A673 (cell line): ENCODE measurements at regions of chr7 and their contacts with region 1.

Region 1: DNA sequence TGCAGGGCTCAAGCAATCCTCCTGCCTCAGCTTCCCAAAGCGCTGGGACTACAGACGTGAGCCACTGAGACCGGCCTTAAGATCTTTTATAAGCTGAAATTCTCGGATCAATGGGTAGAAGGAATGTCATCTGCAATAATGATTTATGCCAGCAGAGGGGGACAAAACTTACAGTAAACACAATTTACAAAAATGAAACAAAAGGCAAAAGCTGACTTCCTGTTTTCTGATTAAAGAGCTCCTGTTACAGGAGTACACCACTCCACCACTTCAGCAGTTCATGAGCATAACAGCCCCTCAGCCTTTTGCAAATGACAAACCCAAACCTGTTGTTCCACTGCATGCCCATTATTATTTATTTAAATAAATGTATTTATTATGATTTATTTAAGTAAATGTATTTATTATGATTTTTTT is 88.5 kb upstream of the ATP6V0A4 start:
- DNase-seq: peak; percentile 84
- H3K4me3 ChIP-seq: no peak overlapping the region
- H3K27ac ChIP-seq: no peak overlapping the region
- H3K4me1 ChIP-seq: peaks cover 23% of the 10 kb centered on the region
- H3K27me3 ChIP-seq: no peaks in the 10 kb centered on the region
- CTCF ChIP-seq: peak; percentile 74

Region 2: DNA sequence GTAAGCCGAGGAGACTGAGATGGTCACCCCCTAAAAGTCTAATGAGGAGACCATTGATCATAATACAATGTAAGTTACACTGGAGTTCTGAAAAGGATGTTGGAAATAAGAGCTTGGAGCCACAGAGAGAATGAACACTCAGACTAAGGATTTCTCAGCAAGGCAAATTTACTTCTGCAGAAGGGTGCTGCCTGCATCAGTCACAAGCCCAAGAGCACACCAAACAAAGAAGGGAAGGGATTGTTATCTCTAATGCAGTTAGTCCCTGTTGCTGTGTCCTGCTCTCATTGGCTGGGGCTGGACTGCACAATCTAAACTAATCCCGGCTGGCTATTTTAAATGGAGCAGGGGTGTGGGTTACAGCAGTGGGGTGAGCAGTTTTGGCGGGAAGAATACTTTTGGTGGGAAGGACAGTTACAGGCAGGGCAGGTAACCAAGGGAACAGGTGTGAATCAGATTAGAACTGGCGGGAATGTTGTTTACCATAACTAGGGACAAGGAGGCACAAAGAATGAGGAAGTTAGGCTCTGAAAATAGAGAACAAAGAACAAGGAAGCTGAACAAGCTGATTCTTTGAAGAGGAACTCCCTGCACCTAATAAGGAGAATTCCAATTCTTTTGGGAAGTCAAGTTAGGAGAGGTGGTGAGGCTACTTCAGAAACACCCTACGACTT is 456.8 kb before region 1 on chr7:
- CTCF ChIA-PET with region 1: no interaction called
- POLR2A ChIA-PET with region 1: no interaction called
- intact Hi-C with region 1: no loop called
- DNase-seq: no peak
- H3K4me3 ChIP-seq: no peak overlapping the region
- H3K27ac ChIP-seq: no peak overlapping the region
- H3K4me1 ChIP-seq: no peaks in the 10 kb centered on the region
- H3K27me3 ChIP-seq: no peaks in the 10 kb centered on the region
- CTCF ChIP-seq: no peak

Region 3: GRCh38 chr7:138951925-138952324 is 65.4 kb after region 1 on chr7:
- CTCF ChIA-PET with region 1: no interaction called
- POLR2A ChIA-PET with region 1: no interaction called
- intact Hi-C with region 1: no loop called
- DNase-seq: no peak
- H3K4me3 ChIP-seq: no peak overlapping the region
- H3K27ac ChIP-seq: no peak overlapping the region
- H3K4me1 ChIP-seq: no peaks in the 10 kb centered on the region
- H3K27me3 ChIP-seq: no peaks in the 10 kb centered on the region
- CTCF ChIP-seq: no peak

Region 4: GRCh38 chr7:138981332-138982203 is 95.1 kb after region 1 on chr7 and contains the start of gene KIAA1549:
- CTCF ChIA-PET with region 1: interaction called, 3 read pairs
- POLR2A ChIA-PET with region 1: no interaction called
- intact Hi-C with region 1: loop called (anchors 5 kb)
- DNase-seq: peak; percentile 75
- H3K4me3 ChIP-seq: peak within 1 kb of the TSS; percentile 56
- H3K27ac ChIP-seq: no peak within 1 kb of the TSS
- H3K4me1 ChIP-seq: peaks cover 6% of the 10 kb centered on the region
- H3K27me3 ChIP-seq: peaks cover 28% of the 10 kb centered on the region
- CTCF ChIP-seq: no peak
- total RNA-seq, gene KIAA1549: 2.5 and 4.2 TPM in 2 replicates

Region 5: DNA sequence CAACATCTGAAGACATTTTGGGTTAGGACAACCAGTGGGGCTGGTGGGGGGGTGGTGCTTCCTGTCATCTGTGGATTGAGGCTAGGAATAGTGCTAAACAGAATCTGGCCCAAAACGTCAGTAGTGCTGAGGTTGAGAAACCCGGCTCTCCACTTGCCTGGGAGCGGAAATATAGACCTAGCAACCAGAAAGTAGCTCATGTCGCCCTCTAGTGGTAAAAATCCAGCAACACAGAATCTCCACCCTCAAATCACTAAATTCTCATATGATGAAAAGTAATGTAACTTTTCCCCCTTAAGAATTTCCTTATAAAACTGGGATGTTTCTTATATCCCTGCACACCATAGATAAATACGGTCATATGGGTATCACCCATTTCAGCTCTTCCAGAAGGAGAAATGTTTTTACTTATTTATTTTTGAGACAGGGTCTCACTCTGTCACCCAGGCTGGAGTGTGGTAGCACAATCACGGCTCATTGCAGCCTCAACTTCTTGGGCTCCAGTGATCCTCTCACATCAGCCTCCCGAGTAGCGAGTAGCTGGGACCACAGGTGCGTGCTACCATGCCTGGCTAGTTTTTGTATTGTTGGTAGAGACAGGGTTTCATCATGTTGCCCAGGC is 188.6 kb after region 1 on chr7:
- CTCF ChIA-PET with region 1: interaction called, 14 read pairs
- POLR2A ChIA-PET with region 1: no interaction called
- intact Hi-C with region 1: loop called (anchors 2 kb)
- DNase-seq: peak; percentile 82
- H3K4me3 ChIP-seq: no peak overlapping the region
- H3K27ac ChIP-seq: no peak overlapping the region
- H3K4me1 ChIP-seq: peaks cover 3% of the 10 kb centered on the region
- H3K27me3 ChIP-seq: no peaks in the 10 kb centered on the region
- CTCF ChIP-seq: peak; percentile 87

Region 6: GRCh38 chr7:139995017-139995931 is 1108.8 kb after region 1 on chr7:
- CTCF ChIA-PET with region 1: no interaction called
- POLR2A ChIA-PET with region 1: no interaction called
- intact Hi-C with region 1: no loop called
- DNase-seq: no peak
- H3K4me3 ChIP-seq: no peak overlapping the region
- H3K27ac ChIP-seq: no peak overlapping the region
- H3K4me1 ChIP-seq: no peaks in the 10 kb centered on the region
- H3K27me3 ChIP-seq: no peaks in the 10 kb centered on the region
- CTCF ChIP-seq: no peak